Activated B cell treated with CpG ODN at 0.5 μM for 24 hours (primary cell): ENCODE measurements at regions of chr18 and their contacts with region 1.

Region 1: DNA sequence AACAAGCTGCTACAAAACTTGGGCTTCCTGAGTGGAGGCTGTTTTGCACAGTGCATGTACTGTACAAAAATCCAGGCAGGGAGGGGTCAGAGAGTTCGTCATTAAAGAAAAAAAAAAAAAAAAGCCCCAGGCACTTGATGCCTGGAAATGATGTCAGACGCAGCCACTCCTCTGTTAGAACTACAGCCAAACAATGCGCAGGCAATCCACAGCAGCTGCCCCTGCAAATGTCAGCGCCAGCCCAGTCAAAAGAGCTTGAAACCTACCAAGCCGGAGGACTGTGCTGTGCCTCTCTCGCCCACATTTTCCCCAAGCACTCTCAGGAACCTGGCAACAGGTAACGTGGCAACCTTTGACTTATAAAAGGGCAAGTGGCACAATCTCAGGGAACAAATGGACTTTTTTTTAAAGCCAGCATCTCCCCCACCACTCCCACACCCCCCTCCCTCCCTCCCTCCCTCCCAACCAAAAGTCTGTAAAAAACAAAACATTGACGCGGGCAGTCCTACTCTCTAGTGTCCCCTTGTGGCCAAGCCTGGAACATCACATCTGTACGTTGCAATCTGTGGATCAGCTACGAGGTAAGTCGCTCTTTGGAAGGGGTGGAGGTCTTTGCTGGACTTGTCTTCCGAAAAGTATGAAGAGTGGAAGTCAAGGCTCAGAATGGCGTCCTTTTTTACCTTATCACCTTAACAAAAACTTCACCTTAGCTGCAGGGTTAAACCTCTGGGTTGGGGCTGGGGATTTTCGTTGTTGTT is 144.1 kb downstream of the TGIF1 start:
- DNase-seq: peak; percentile 76
- ATAC-seq: peak; percentile 78
- H3K4me3 Mint-ChIP-seq: peak overlapping the region; percentile 90
- H3K27ac Mint-ChIP-seq: peak overlapping the region; percentile 94
- H3K4me1 Mint-ChIP-seq: peaks cover 65% of the 10 kb centered on the region
- H3K27me3 Mint-ChIP-seq: no peaks in the 10 kb centered on the region
- CTCF ChIP-seq: no peak

Region 2: GRCh38 chr18:2002151-2002550 is 1591.9 kb before region 1 on chr18:
- CTCF ChIA-PET with region 1: no interaction called
- POLR2A ChIA-PET with region 1: no interaction called
- intact Hi-C with region 1: no loop called
- DNase-seq: no peak
- ATAC-seq: no peak
- H3K4me3 Mint-ChIP-seq: no peak overlapping the region
- H3K27ac Mint-ChIP-seq: no peak overlapping the region
- H3K4me1 Mint-ChIP-seq: no peaks in the 10 kb centered on the region
- H3K27me3 Mint-ChIP-seq: no peaks in the 10 kb centered on the region
- CTCF ChIP-seq: no peak

Region 3: DNA sequence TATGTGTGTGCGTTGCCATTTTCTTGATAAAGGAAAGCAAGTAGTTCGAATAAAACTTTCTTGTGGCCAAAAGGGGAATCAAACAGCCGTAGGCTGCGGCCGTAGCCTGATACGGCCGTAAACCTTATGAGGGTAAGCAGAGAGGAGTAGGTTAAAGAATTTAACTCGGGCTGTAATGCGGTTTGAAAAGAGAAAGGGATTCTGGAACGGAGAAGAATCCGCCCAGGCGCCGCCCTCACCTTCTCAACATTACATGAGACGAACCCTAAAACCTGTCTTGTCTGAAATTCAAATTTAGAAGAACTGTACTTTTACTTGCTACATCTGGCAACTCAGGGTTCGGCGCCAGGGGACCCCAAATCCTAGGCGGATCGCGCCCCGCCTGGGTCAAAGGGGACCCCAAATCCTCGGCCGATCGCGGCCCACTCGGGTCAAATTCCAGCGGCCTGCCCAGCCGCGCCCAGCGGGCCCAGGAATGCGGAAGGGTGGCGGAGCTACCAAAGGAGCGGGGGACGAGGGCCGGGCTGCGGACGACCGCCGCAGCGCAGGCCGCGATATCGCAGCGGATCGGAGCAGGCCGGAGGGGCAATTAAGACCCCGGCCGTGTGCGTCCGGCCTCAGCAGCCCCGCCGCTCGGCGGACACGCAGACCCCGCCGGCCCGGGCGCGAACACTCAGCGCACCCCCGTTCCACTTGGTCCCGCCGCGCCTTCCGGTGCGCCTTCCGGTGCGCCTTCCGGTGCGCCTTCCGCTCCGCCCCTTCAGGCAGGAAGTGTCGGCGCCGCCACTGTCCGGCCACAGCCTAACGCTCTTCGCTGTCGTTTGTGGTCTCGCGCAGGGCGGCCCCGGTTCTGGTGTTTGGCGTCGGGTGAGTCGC is 332.5 kb before region 1 on chr18 and contains the start of gene MYL12B:
- CTCF ChIA-PET with region 1: no interaction called
- POLR2A ChIA-PET with region 1: interaction called, 25 read pairs
- intact Hi-C with region 1: no loop called
- DNase-seq: peak; percentile 81
- ATAC-seq: peak; percentile 83
- H3K4me3 Mint-ChIP-seq: peak within 1 kb of the TSS; percentile 94
- H3K27ac Mint-ChIP-seq: peak within 1 kb of the TSS; percentile 97
- H3K4me1 Mint-ChIP-seq: peaks cover 80% of the 10 kb centered on the region
- H3K27me3 Mint-ChIP-seq: no peaks in the 10 kb centered on the region
- CTCF ChIP-seq: no peak
- total RNA-seq, gene MYL12B: 185 and 198 TPM in 2 replicates

Region 4: GRCh38 chr18:3380384-3380961 is 213.6 kb before region 1 on chr18:
- CTCF ChIA-PET with region 1: interaction called, 3 read pairs
- POLR2A ChIA-PET with region 1: interaction called, 7 read pairs
- intact Hi-C with region 1: loop called (anchors 1 kb)
- DNase-seq: no peak
- ATAC-seq: peak; percentile 66
- H3K4me3 Mint-ChIP-seq: no peak overlapping the region
- H3K27ac Mint-ChIP-seq: no peak overlapping the region
- H3K4me1 Mint-ChIP-seq: peaks cover 21% of the 10 kb centered on the region
- H3K27me3 Mint-ChIP-seq: no peaks in the 10 kb centered on the region
- CTCF ChIP-seq: no peak

Region 5: GRCh38 chr18:3472681-3473544 is 121.2 kb before region 1 on chr18:
- CTCF ChIA-PET with region 1: interaction called, 10 read pairs
- POLR2A ChIA-PET with region 1: interaction called, 3 read pairs
- intact Hi-C with region 1: no loop called
- DNase-seq: no peak
- ATAC-seq: peak; percentile 50
- H3K4me3 Mint-ChIP-seq: no peak overlapping the region
- H3K27ac Mint-ChIP-seq: peak overlapping the region; percentile 37
- H3K4me1 Mint-ChIP-seq: peaks cover 6% of the 10 kb centered on the region
- H3K27me3 Mint-ChIP-seq: no peaks in the 10 kb centered on the region
- CTCF ChIP-seq: no peak

Region 6: DNA sequence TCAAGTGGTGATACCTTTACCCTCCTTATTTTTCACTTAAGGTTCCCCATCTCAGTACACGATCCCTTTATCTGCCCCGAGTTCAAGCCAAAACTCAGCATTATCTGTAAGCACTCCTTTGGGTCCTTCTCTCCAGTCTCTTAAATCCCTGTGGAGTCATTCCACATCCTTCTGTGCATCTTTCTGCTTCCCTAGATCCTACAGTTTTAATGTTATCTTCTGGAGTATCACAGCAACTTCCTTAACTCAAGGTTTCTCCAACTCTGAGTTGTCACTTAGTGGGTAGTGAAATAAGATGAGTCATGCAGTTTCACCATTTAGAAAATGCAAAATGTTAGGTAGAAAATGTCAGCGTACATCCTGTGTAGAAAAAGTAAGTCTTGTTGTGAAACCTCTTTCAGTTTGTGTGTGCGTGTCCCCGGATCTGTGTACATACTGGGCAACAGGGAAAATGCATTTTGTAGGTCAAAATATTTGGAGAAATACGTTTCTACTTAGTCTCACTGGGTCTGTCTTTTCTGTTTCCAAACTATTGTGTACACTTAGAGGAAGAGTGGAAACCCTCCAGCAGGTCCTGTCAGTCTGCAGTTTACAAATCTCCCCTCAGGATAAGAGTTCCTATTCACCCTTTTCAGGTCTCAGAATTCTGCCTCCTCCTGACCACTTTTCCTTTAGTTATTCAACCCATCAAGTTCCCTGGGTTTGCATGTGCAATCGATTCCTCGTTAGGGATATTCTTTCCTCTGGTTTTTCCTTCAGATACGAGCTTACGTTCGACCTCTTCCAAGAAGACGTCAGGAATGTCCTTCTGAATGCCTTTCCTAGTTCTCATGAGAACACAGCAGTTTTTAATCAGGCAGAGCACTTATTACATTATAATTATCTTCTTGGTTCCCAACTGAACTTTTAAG is 10.7 kb after region 1 on chr18:
- CTCF ChIA-PET with region 1: interaction called, 17 read pairs
- POLR2A ChIA-PET with region 1: interaction called, 82 read pairs
- intact Hi-C with region 1: loop called (anchors 1 kb)
- DNase-seq: no peak
- ATAC-seq: peak; percentile 73
- H3K4me3 Mint-ChIP-seq: no peak overlapping the region
- H3K27ac Mint-ChIP-seq: no peak overlapping the region
- H3K4me1 Mint-ChIP-seq: peaks cover 3% of the 10 kb centered on the region
- H3K27me3 Mint-ChIP-seq: no peaks in the 10 kb centered on the region
- CTCF ChIP-seq: no peak

Region 7: DNA sequence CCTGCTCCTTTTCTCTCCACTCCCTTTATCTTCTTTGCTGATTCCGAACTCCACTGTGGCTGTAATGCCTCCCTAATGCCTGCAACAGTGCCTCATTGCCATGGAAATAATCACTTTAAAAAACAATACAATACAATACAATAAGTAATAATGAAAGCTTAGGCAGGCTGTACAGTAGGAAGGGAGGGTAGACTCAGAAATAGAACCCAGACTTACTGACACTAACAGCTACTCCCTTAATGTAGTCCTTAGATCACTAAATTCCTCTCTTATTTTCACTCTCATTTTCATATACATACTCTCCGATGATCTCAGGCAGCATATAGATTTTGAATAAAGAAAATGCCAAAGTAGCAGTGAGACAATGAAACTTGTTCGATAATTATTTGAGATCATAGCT is 790.8 kb after region 1 on chr18:
- CTCF ChIA-PET with region 1: no interaction called
- POLR2A ChIA-PET with region 1: no interaction called
- intact Hi-C with region 1: no loop called
- DNase-seq: no peak
- ATAC-seq: no peak
- H3K4me3 Mint-ChIP-seq: no peak overlapping the region
- H3K27ac Mint-ChIP-seq: no peak overlapping the region
- H3K4me1 Mint-ChIP-seq: no peaks in the 10 kb centered on the region
- H3K27me3 Mint-ChIP-seq: no peaks in the 10 kb centered on the region
- CTCF ChIP-seq: no peak